Activated CD4-positive, alpha-beta T cell treated with anti-CD3 and anti-CD28 coated beads, Interleukin-2, amount 10 ng/mL, durations not matched to agents 24 days and 14 days (primary cell): ENCODE measurements at regions of chr1 and their contacts with region 1.

Region 1: GRCh38 chr1:48530727-48531351 is 58.8 kb upstream of the SPATA6 start:
- DNase-seq: peak; percentile 85
- H3K4me3 Mint-ChIP-seq: no peak overlapping the region
- H3K27ac Mint-ChIP-seq: no peak overlapping the region
- H3K4me1 Mint-ChIP-seq: no peaks in the 10 kb centered on the region
- H3K27me3 Mint-ChIP-seq: no peaks in the 10 kb centered on the region

Region 2: GRCh38 chr1:48498096-48498791 is 32.6 kb before region 1 on chr1:
- intact Hi-C with region 1: loop called (anchors 2 kb)
- DNase-seq: peak; percentile 89
- H3K4me3 Mint-ChIP-seq: peak overlapping the region; percentile 23
- H3K27ac Mint-ChIP-seq: no peak overlapping the region
- H3K4me1 Mint-ChIP-seq: peaks cover 5% of the 10 kb centered on the region
- H3K27me3 Mint-ChIP-seq: no peaks in the 10 kb centered on the region

Region 3: GRCh38 chr1:49541096-49541752 is 1010.4 kb after region 1 on chr1:
- intact Hi-C with region 1: no loop called
- DNase-seq: no peak
- H3K4me3 Mint-ChIP-seq: no peak overlapping the region
- H3K27ac Mint-ChIP-seq: no peak overlapping the region
- H3K4me1 Mint-ChIP-seq: no peaks in the 10 kb centered on the region
- H3K27me3 Mint-ChIP-seq: no peaks in the 10 kb centered on the region